K562 (cell line): ENCODE measurements at regions of chr3 and their contacts with region 1.

Region 1: GRCh38 chr3:156554842-156555687 is at the start of gene SSR3:
- DNase-seq: peak; percentile 97 to 99 (median 97)
- ATAC-seq: peak; percentile 98
- H3K4me3 ChIP-seq: peak within 1 kb of the TSS; percentile 74
- H3K27ac ChIP-seq: peak within 1 kb of the TSS; percentile 86
- H3K4me1 ChIP-seq: peaks cover 6 to 42% of the 10 kb centered on the region in 2 experiments; a peak in 4 of 5 replicates
- H3K27me3 ChIP-seq: no peaks in the 10 kb centered on the region
- CTCF ChIP-seq: no peak; a peak in 1 of 6 replicates
- EP300 ChIP-seq: peak; percentile 9; the same call in 1 of the 2 replicates
- POLR2A ChIP-seq: peak; percentile 96
- RAD21 ChIP-seq: no peak
- polyA plus RNA-seq, gene SSR3: 423 to 464 TPM

Region 2: GRCh38 chr3:156460206-156460611 is 94.9 kb before region 1 on chr3:
- CTCF ChIA-PET with region 1: no interaction called
- POLR2A ChIA-PET with region 1: interaction called, 10 read pairs
- in situ Hi-C with region 1: no loop called
- intact Hi-C with region 1: no loop called
- DNase-seq: peak; percentile 50 to 75 (median 64)
- ATAC-seq: peak; percentile 72
- H3K4me3 ChIP-seq: no peak overlapping the region
- H3K27ac ChIP-seq: peak overlapping the region; percentile 68
- H3K4me1 ChIP-seq: peaks cover 9 to 71% of the 10 kb centered on the region in 2 experiments; a peak in 4 of 5 replicates
- H3K27me3 ChIP-seq: no peaks in the 10 kb centered on the region
- CTCF ChIP-seq: no peak
- EP300 ChIP-seq: peak; percentile 93
- POLR2A ChIP-seq: no peak
- RAD21 ChIP-seq: no peak

Region 3: GRCh38 chr3:156542715-156543555 is 12.1 kb before region 1 on chr3:
- CTCF ChIA-PET with region 1: no interaction called
- POLR2A ChIA-PET with region 1: interaction called, 22 read pairs
- in situ Hi-C with region 1: no loop called
- intact Hi-C with region 1: no loop called
- DNase-seq: no peak
- ATAC-seq: no peak
- H3K4me3 ChIP-seq: no peak overlapping the region
- H3K27ac ChIP-seq: no peak overlapping the region
- H3K4me1 ChIP-seq: no peaks in the 10 kb centered on the region; a peak in 1 of 5 replicates
- H3K27me3 ChIP-seq: no peaks in the 10 kb centered on the region
- CTCF ChIP-seq: no peak
- EP300 ChIP-seq: no peak
- POLR2A ChIP-seq: no peak
- RAD21 ChIP-seq: no peak

Region 4: GRCh38 chr3:156605686-156606605 is 50.9 kb after region 1 on chr3:
- CTCF ChIA-PET with region 1: no interaction called
- POLR2A ChIA-PET with region 1: interaction called, 10 read pairs
- in situ Hi-C with region 1: no loop called
- intact Hi-C with region 1: loop called (anchors 2 kb)
- DNase-seq: peak; percentile 69 to 93 (median 76)
- ATAC-seq: peak; percentile 86
- H3K4me3 ChIP-seq: peak overlapping the region; percentile 39
- H3K27ac ChIP-seq: peak overlapping the region; percentile 96
- H3K4me1 ChIP-seq: peaks cover 18 to 44% of the 10 kb centered on the region in 2 experiments
- H3K27me3 ChIP-seq: no peaks in the 10 kb centered on the region
- CTCF ChIP-seq: no peak
- EP300 ChIP-seq: peak; percentile 49
- POLR2A ChIP-seq: peak; percentile 87
- RAD21 ChIP-seq: no peak

Region 5: GRCh38 chr3:156816800-156817645 is 262.0 kb after region 1 on chr3:
- CTCF ChIA-PET with region 1: no interaction called
- POLR2A ChIA-PET with region 1: no interaction called
- in situ Hi-C with region 1: no loop called
- intact Hi-C with region 1: loop called (anchors 10 kb)
- DNase-seq: peak; percentile 58 to 80 (median 64)
- ATAC-seq: peak; percentile 85
- H3K4me3 ChIP-seq: peak overlapping the region; percentile 37
- H3K27ac ChIP-seq: peak overlapping the region; percentile 66
- H3K4me1 ChIP-seq: peaks cover 14 to 22% of the 10 kb centered on the region in 2 experiments
- H3K27me3 ChIP-seq: no peaks in the 10 kb centered on the region
- CTCF ChIP-seq: peak; percentile 15 to 16 (median 15); a peak in 1 of 6 replicates
- EP300 ChIP-seq: no peak
- POLR2A ChIP-seq: 0 out of 2 replicates have a peak, but pooled peaks have one; percentile 49
- RAD21 ChIP-seq: no peak